HCT116 (cell line): ENCODE measurements at regions of chr13 and their contacts with region 1.

Region 1: GRCh38 chr13:26698392-26699196 is 62.0 kb downstream of the GPR12 start:
- DNase-seq: peak; percentile 54
- ATAC-seq: peak; percentile 93
- H3K4me3 ChIP-seq: no peak overlapping the region
- H3K27ac ChIP-seq: no peak overlapping the region
- H3K4me1 ChIP-seq: peaks cover 0 to 8% of the 10 kb centered on the region in 2 experiments; a peak in 1 of 4 replicates
- H3K27me3 ChIP-seq: peaks cover 9% of the 10 kb centered on the region
- CTCF ChIP-seq: peak; percentile 72 to 96 (median 90)
- POLR2A ChIP-seq: no peak
- RAD21 ChIP-seq: peak; percentile 88

Region 2: GRCh38 chr13:26112843-26113242 is 585.8 kb before region 1 on chr13:
- CTCF ChIA-PET with region 1: no interaction called
- POLR2A ChIA-PET with region 1: no interaction called
- RAD21 ChIA-PET with region 1: no interaction called
- intact Hi-C with region 1: loop called (anchors 5 kb)
- DNase-seq: no peak
- ATAC-seq: no peak
- H3K4me3 ChIP-seq: no peak overlapping the region
- H3K27ac ChIP-seq: no peak overlapping the region
- H3K4me1 ChIP-seq: no peaks in the 10 kb centered on the region
- H3K27me3 ChIP-seq: peaks cover 43% of the 10 kb centered on the region
- CTCF ChIP-seq: peak in 2 of 3 experiments; percentile 35 to 54; a peak in 4 of 6 replicates
- POLR2A ChIP-seq: no peak
- RAD21 ChIP-seq: peak; percentile 21; the same call in 1 of the 2 replicates

Region 3: DNA sequence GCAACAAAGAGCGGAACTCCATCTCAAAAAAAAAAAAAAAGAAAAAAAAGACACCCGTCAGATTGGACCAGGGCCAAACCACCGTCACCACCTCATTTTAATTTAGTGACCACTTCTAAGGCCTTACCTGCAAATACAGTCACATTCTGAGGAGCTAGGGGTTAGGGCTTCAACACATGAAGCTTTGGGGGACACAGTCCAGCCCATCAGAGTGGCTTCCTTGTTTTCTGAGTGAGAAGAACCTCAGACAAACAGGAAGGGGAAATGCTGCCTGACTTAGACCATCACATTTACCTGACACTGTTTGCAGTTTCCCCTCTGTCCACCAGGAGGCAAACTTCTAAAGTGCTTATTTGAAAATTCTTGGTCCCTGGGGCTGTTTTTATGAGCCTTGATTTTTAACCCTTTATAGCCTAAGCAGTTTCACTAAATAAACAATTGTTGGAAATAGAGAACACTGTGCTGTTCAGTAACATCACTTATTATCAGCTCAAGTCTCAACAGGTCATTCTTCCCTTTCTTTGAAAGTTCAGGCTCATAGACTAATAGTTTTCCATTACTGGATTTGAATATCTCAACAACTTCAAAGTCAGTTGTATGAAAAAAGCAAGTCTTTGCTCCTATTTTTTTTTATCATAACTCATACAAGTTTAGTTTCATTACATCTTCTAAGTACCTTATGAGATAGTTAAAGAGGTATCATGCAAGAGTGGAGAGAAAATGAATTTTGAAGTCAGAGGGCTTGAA is 216.0 kb before region 1 on chr13:
- CTCF ChIA-PET with region 1: interaction called, 16 read pairs
- POLR2A ChIA-PET with region 1: no interaction called
- RAD21 ChIA-PET with region 1: interaction called in 1 of 2 experiments, 4 read pairs
- intact Hi-C with region 1: loop called (anchors 1 kb)
- DNase-seq: peak; percentile 76
- ATAC-seq: peak; percentile 78
- H3K4me3 ChIP-seq: peak overlapping the region; percentile 2 to 50; a peak in 2 of 4 replicates
- H3K27ac ChIP-seq: no peak overlapping the region
- H3K4me1 ChIP-seq: peaks cover 3 to 9% of the 10 kb centered on the region in 2 experiments; a peak in 3 of 4 replicates
- H3K27me3 ChIP-seq: no peaks in the 10 kb centered on the region
- CTCF ChIP-seq: peak; percentile 48 to 87 (median 83); a peak in 5 of 6 replicates
- POLR2A ChIP-seq: no peak
- RAD21 ChIP-seq: peak; percentile 59

Region 4: GRCh38 chr13:26658448-26659385 is 39.9 kb before region 1 on chr13:
- CTCF ChIA-PET with region 1: interaction called, 11 read pairs
- POLR2A ChIA-PET with region 1: no interaction called
- RAD21 ChIA-PET with region 1: interaction called in 1 of 2 experiments, 4 read pairs
- intact Hi-C with region 1: no loop called
- DNase-seq: no peak
- ATAC-seq: no peak
- H3K4me3 ChIP-seq: no peak overlapping the region
- H3K27ac ChIP-seq: no peak overlapping the region
- H3K4me1 ChIP-seq: peaks cover 0 to 4% of the 10 kb centered on the region in 2 experiments; a peak in 2 of 4 replicates
- H3K27me3 ChIP-seq: peaks cover 44% of the 10 kb centered on the region
- CTCF ChIP-seq: no peak
- POLR2A ChIP-seq: no peak
- RAD21 ChIP-seq: no peak

Region 5: DNA sequence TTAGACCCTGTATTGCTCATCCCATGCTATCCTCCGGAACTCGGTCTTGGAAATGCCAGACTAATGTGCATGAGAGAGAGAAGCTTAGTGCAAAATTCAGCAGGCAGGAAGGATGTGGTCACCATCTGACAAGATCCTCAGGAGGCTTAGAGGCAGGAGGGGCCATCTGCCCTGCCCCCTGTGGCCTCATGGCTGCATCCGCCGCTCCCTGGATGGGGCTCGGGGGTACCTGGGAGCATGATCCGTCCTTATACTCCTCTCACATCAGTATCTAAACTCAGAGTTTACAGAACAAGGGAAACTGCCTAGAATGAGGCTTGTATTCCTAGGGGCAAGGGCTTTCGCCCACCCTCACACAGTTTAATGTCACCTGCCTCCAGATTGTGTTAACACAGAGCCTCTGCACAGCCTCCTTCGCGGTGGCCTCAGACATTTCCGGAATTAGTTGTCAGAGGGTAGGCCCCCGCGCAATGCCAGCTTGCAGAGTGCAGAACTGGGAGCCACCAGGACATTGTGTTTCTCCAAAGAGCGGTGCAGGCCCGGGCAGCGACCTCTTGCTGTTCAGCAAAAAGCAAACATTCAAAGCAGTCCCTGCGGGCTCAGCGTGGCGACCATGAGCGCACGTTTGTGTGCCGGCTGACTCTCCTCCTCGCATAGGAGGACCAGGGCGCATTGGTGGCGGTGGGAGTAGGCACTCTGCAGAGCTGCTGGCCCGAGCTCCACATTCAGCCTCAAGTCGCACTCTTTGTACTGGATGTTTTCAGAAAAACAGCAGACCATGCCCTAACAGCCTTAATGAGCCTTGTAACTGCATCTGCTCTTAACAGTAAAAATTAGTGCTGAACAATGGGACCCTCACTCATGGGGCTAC is 22.9 kb after region 1 on chr13:
- CTCF ChIA-PET with region 1: interaction called, 12 read pairs
- POLR2A ChIA-PET with region 1: no interaction called
- RAD21 ChIA-PET with region 1: no interaction called
- intact Hi-C with region 1: no loop called
- DNase-seq: no peak
- ATAC-seq: no peak
- H3K4me3 ChIP-seq: no peak overlapping the region
- H3K27ac ChIP-seq: no peak overlapping the region
- H3K4me1 ChIP-seq: no peaks in the 10 kb centered on the region
- H3K27me3 ChIP-seq: 0 out of 2 replicates have a peak, but pooled peaks cover 8% of the 10 kb centered on the region
- CTCF ChIP-seq: no peak
- POLR2A ChIP-seq: no peak
- RAD21 ChIP-seq: no peak